ENCODE measurements at regions of chr5 and their contacts with region 1.

Region 1: GRCh38 chr5:14202462-14202861 is 59.3 kb downstream of the TRIO start:
- DNase-seq: peak; percentile 82
- H3K4me3 ChIP-seq: no peak overlapping the region
- H3K27ac ChIP-seq: no peak overlapping the region
- H3K4me1 ChIP-seq: peaks cover 41% of the 10 kb centered on the region
- H3K27me3 ChIP-seq: no peaks in the 10 kb centered on the region
- CTCF ChIP-seq: no peak

Region 2: GRCh38 chr5:13898566-13898965 is 303.9 kb before region 1 on chr5:
- CTCF ChIA-PET with region 1: no interaction called
- POLR2A ChIA-PET with region 1: no interaction called
- intact Hi-C with region 1: no loop called
- DNase-seq: no peak
- H3K4me3 ChIP-seq: no peak overlapping the region
- H3K27ac ChIP-seq: no peak overlapping the region
- H3K4me1 ChIP-seq: no peaks in the 10 kb centered on the region
- H3K27me3 ChIP-seq: peaks cover 22% of the 10 kb centered on the region
- CTCF ChIP-seq: no peak

Region 3: DNA sequence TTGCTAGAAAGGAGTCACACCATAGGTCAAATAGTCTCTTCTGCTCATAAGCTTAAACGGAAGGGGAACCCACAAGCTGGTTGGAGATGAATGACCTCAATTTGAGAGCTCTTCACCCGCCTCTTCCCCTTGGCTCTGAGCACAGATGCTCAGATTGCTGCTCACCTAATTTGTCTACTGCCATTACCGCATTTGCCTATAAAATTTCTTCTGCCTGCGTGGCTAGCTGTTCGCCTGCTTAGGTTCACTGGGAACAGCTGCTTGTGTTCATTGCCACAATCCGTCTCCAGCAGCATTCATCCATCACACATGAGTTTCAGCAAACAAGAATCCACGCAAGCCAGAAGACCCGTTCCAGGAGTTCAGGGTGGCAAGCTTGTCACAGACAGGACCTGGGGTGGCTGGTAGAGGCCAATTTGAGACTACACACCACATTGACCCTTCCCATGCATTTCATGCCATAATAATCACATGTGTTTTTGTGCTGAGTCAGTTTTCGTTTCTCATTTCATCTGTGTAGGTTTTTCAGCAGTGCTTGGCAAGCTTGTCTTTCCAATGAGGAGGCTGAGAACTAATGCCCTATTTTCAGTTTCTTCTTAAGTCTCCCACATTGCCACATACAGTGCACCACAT is 207.7 kb before region 1 on chr5:
- CTCF ChIA-PET with region 1: no interaction called
- POLR2A ChIA-PET with region 1: interaction called, 13 read pairs
- intact Hi-C with region 1: no loop called
- DNase-seq: no peak
- H3K4me3 ChIP-seq: no peak overlapping the region
- H3K27ac ChIP-seq: no peak overlapping the region
- H3K4me1 ChIP-seq: no peaks in the 10 kb centered on the region
- H3K27me3 ChIP-seq: peaks cover 5% of the 10 kb centered on the region
- CTCF ChIP-seq: no peak

Region 4: GRCh38 chr5:15897656-15898055 is 1695.2 kb after region 1 on chr5:
- CTCF ChIA-PET with region 1: no interaction called
- POLR2A ChIA-PET with region 1: no interaction called
- intact Hi-C with region 1: no loop called
- DNase-seq: no peak
- H3K4me3 ChIP-seq: no peak overlapping the region
- H3K27ac ChIP-seq: no peak overlapping the region
- H3K4me1 ChIP-seq: no peaks in the 10 kb centered on the region
- H3K27me3 ChIP-seq: no peaks in the 10 kb centered on the region
- CTCF ChIP-seq: no peak

Measured in A673 (cell line).